MCF 10A (cell line): ENCODE measurements at regions of chr2 and their contacts with region 1.

Region 1: DNA sequence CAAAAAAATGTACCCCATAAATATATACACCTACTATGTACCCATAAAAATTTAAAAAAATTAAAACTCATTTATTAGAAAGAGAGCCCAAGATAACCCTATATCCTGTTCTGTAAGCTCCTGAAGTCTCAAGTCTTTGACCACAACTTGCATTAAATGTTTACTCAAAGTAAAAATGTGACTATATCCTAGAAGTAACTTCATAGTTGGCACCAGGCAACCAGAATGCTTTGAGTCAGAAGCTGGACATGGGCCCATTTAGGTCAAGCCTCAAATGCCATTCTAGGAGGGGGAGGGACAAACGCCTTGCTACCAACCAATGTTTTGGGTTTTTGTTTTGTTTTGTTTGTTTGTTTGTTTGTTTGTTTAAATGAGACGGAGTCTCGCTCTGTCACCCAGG is 9.3 kb upstream of the TBC1D8 start:
- DNase-seq: peak; percentile 88
- H3K4me3 Mint-ChIP-seq: no peak overlapping the region
- H3K27ac Mint-ChIP-seq: peak overlapping the region; percentile 71
- H3K4me1 Mint-ChIP-seq: peaks cover 8% of the 10 kb centered on the region
- H3K27me3 Mint-ChIP-seq: no peaks in the 10 kb centered on the region
- CTCF ChIP-seq: no peak

Region 2: GRCh38 chr2:100832885-100833284 is 327.6 kb before region 1 on chr2:
- CTCF ChIA-PET with region 1: no interaction called
- POLR2A ChIA-PET with region 1: no interaction called
- intact Hi-C with region 1: no loop called
- DNase-seq: peak; percentile 86
- H3K4me3 Mint-ChIP-seq: no peak overlapping the region
- H3K27ac Mint-ChIP-seq: peak overlapping the region; percentile 27
- H3K4me1 Mint-ChIP-seq: peaks cover 17% of the 10 kb centered on the region
- H3K27me3 Mint-ChIP-seq: no peaks in the 10 kb centered on the region
- CTCF ChIP-seq: no peak

Region 3: DNA sequence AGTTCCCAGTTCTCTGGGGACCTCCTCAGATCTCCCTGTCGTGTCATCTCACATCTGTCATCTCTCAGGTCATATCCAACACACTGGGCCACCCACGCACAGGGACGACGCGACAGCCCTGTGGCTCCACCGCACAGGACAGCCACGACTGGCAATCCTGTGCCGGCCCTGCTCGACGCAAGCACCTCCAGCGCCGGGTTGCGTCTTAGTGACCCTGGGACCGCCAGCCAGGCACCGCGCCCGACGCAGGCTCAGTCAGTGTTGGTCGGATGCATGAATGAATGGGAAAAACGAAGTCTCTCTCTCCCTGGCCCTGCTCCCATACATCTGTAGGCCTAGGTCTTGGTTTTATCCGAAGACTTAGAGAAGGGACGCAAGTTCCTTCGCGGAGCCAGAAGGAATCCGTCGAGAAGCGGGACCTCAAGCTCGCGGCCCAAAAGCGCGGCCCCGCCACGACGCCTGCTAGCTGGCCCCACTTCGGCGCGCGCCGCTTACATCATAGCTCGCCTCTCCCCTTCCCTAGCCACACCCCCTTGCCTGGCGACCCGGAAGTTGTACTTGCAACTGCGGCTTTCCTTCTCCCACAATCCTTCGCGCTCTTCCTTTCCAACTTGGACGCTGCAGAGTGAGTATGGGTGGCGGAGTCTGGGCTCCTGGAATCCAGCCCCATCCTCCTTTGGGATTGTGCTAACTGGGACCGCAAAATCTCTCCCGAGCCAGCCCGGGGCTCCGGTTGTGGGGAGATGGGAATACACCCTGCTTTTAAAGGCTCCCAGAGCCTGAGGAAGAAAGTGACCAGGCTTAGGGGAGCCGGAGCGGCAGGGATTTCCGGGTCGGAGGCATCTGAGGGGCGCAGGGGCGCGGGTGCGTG is 158.5 kb before region 1 on chr2 and contains the start of gene RPL31:
- CTCF ChIA-PET with region 1: no interaction called
- POLR2A ChIA-PET with region 1: interaction called, 10 read pairs
- intact Hi-C with region 1: no loop called
- DNase-seq: peak; percentile 98
- H3K4me3 Mint-ChIP-seq: peak within 1 kb of the TSS; percentile 92
- H3K27ac Mint-ChIP-seq: peak within 1 kb of the TSS; percentile 99
- H3K4me1 Mint-ChIP-seq: peaks cover 19% of the 10 kb centered on the region
- H3K27me3 Mint-ChIP-seq: no peaks in the 10 kb centered on the region
- CTCF ChIP-seq: no peak
- total RNA-seq, gene RPL31: 1,648 and 1,732 TPM in 2 replicates

Region 4: GRCh38 chr2:101012706-101013181 is 147.7 kb before region 1 on chr2:
- CTCF ChIA-PET with region 1: interaction called, 15 read pairs
- POLR2A ChIA-PET with region 1: interaction called, 4 read pairs
- intact Hi-C with region 1: no loop called
- DNase-seq: peak; percentile 60
- H3K4me3 Mint-ChIP-seq: no peak overlapping the region
- H3K27ac Mint-ChIP-seq: no peak overlapping the region
- H3K4me1 Mint-ChIP-seq: peaks cover 3% of the 10 kb centered on the region
- H3K27me3 Mint-ChIP-seq: no peaks in the 10 kb centered on the region
- CTCF ChIP-seq: peak; percentile 63

Region 5: DNA sequence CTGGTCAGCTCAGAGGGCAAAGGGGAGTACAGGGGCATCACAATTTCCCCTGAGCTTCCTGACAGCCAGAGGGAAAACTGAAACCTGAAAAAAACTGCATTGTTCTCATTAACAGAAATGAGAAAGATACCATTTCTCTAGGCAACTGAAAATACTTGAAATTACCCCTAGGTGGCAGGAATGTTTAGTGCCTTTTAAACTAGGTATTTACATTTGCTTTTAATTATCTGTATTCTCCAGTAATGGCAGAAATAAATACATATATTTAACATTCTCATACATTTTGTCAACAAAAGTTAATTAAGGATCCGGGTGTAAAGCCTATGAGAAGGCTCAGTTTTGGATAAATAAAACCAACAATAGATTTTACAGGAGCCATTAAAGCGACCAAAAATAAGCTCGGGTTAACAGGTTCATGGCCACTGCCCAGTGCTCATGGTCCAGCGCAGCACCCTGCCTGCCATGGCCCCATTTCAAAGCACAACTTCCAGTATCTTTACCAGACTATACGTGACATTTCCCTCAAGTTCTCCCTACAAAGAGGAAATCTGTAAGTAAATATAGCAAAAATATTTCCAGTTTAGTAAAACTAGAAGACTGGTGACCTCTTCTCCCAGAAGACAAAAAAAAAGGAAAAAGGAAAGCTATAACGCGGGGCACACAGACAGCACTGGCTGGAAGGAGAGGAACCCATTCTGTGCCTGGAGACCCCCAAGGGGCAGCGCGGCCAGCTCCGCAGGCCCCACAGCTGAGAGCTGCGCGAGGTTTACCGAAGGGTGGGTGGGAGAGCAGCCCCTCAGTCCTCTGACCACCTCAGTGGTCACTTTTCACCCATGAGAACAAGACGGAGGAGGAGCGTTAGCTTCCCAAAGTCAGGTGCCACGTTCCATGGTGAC is 123.6 kb before region 1 on chr2:
- CTCF ChIA-PET with region 1: interaction called, 79 read pairs
- POLR2A ChIA-PET with region 1: interaction called, 5 read pairs
- intact Hi-C with region 1: no loop called
- DNase-seq: peak; percentile 35
- H3K4me3 Mint-ChIP-seq: no peak overlapping the region
- H3K27ac Mint-ChIP-seq: no peak overlapping the region
- H3K4me1 Mint-ChIP-seq: peaks cover 5% of the 10 kb centered on the region
- H3K27me3 Mint-ChIP-seq: no peaks in the 10 kb centered on the region
- CTCF ChIP-seq: peak; percentile 53

Region 6: DNA sequence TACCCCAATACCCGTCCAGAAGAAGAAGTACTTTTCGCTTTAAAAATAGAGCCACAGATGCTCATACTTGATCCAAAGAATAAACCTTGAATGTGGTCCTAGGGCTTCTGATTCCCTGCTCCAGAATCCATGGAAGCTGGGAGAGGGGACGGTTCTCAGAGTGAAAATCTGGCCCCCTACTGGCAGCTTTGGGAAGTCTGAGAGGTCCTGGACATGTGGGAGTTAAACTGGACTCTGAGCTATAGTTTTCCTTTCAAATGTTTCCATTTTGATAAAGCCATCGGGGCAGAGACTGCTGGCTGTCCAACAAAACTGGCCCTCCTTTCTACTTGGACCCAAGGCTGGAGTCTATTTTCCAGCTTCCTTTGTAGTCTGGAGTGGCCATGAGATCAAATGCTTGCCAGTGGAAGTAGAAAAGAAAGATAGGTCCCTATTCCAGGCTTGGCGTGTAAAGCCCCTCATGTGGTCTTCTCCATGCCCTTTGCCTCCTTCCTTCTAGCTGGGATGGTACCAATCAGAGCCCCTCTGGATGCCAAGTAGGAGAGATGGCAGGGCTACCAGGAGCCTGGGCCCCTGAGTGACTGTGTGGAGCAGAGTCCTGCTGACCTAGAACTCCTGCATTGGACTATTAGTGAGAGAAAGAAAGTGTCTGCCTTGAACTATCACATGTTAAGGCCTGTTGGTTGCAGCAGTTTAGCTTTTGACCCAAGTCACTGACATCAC is 28.4 kb after region 1 on chr2:
- CTCF ChIA-PET with region 1: interaction called, 10 read pairs
- POLR2A ChIA-PET with region 1: interaction called, 21 read pairs
- intact Hi-C with region 1: no loop called
- DNase-seq: peak; percentile 42
- H3K4me3 Mint-ChIP-seq: no peak overlapping the region
- H3K27ac Mint-ChIP-seq: no peak overlapping the region
- H3K4me1 Mint-ChIP-seq: peaks cover 16% of the 10 kb centered on the region
- H3K27me3 Mint-ChIP-seq: no peaks in the 10 kb centered on the region
- CTCF ChIP-seq: peak; percentile 31

Region 7: DNA sequence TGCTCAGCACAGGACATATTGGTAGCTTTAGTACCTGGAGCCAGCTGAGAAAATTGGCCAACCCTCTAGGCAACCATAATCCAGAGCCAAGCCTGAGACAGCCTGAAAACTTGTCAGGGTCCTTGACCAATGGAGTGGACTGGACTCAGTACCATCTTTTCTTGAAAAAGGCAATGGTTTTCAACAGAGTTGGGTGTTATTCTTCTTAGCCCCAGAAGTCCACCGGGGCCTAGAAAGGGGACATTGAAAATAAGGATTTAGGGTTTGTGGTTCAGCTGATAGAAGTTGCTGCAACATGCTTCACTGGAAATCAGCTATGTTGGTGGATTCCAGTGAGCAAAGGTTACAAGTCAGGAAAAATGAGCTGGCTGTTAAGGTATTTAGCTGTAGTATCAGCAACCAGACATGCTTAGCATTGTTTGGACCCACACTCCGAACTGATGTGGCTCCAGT is 70.1 kb after region 1 on chr2:
- CTCF ChIA-PET with region 1: no interaction called
- POLR2A ChIA-PET with region 1: no interaction called
- intact Hi-C with region 1: no loop called
- DNase-seq: no peak
- H3K4me3 Mint-ChIP-seq: no peak overlapping the region
- H3K27ac Mint-ChIP-seq: no peak overlapping the region
- H3K4me1 Mint-ChIP-seq: peaks cover 6% of the 10 kb centered on the region
- H3K27me3 Mint-ChIP-seq: no peaks in the 10 kb centered on the region
- CTCF ChIP-seq: no peak